ENCODE measurements at regions of chr3 and their contacts with region 1.

Region 1: DNA sequence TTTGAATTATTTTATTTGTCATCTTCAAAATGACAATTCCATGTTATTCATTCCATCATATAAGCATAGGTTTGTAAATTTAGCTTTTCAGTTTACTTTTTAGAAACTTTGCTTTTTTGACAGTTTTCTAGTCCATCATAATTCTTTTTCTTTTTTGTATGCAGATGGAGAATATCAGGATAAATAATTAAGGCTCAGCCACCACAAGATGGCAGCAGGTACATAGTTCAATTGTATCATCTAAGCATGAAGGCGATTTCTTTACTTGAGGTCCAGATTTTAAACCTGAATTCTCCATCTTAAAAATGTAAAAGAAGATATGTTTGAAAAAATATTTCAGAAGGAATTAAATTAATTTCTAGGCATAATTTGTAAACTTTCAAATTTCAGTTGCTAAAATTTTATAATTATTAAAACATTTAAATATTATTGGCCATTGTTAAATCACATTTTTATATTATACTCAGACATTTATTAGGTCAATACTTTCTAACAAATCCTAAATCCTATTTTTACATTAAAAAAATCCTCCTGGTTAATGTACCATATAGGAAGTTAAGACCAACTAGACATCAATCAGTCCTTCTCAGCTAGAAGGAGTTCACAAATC is 15.1 kb downstream of the PLSCR5 start:
- DNase-seq: peak; percentile 39
- ATAC-seq: no peak
- H3K4me3 Mint-ChIP-seq: no peak overlapping the region
- H3K27ac Mint-ChIP-seq: no peak overlapping the region
- H3K4me1 Mint-ChIP-seq: no peaks in the 10 kb centered on the region
- H3K27me3 Mint-ChIP-seq: peaks cover 27% of the 10 kb centered on the region

Region 2: DNA sequence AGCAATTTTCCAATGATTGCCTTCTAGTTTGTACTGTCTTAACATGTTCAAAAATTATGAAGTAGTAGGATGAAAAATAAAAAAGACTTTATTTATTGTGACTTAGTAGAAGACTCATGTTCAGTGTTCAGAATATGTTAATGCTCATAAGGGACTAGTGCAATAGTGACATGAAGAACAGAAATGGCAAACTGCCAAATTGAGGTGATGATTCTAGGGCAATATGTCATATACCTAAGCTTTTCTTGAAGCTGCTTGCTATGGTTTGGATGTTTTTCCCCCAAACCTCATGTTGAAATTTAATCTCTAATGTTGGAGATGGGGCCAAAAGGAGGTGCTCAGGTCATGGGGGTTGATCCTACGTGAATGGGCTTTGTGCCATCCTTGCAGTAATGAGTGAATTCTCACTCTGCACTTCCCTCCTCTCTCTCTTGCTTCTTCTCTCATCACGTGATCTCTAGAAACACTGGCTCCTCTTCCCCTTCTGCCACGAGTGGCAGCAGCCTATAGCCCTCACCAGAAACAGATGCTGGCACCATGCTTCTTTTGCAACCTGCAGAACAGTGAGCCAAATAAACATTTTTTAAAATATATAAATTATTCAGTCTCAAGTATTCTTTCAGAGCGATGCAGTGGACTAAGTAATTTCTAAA is 32.4 kb before region 1 on chr3:
- CTCF ChIA-PET with region 1: no interaction called
- POLR2A ChIA-PET with region 1: no interaction called
- DNase-seq: no peak
- ATAC-seq: no peak
- H3K4me3 Mint-ChIP-seq: no peak overlapping the region
- H3K27ac Mint-ChIP-seq: no peak overlapping the region
- H3K4me1 Mint-ChIP-seq: peaks cover 20% of the 10 kb centered on the region
- H3K27me3 Mint-ChIP-seq: peaks cover 5% of the 10 kb centered on the region

Region 3: DNA sequence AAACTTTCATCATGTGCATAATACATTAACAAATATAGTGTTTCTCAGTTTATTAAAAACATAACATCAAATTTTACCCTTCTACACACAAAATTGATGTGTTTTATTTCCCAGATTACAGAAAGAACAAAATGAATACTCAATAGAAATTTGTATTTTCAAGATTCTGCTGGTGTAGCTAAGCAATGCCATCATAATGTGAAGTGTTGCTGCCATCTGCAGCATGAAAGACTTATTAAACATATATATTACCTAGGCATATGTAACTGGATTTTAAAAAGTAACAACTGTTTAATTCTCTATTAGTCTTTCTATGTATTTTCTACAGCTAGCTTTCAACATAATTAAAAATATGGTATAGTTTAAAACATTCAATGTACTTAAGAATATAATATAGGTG is 12.3 kb before region 1 on chr3:
- CTCF ChIA-PET with region 1: interaction called, 11 read pairs
- POLR2A ChIA-PET with region 1: no interaction called
- DNase-seq: peak; percentile 53
- ATAC-seq: peak; percentile 67
- H3K4me3 Mint-ChIP-seq: no peak overlapping the region
- H3K27ac Mint-ChIP-seq: no peak overlapping the region
- H3K4me1 Mint-ChIP-seq: no peaks in the 10 kb centered on the region
- H3K27me3 Mint-ChIP-seq: peaks cover 11% of the 10 kb centered on the region

Region 4: GRCh38 chr3:146611096-146611495 is 21.1 kb after region 1 on chr3:
- CTCF ChIA-PET with region 1: no interaction called
- POLR2A ChIA-PET with region 1: no interaction called
- DNase-seq: no peak
- ATAC-seq: no peak
- H3K4me3 Mint-ChIP-seq: no peak overlapping the region
- H3K27ac Mint-ChIP-seq: no peak overlapping the region
- H3K4me1 Mint-ChIP-seq: no peaks in the 10 kb centered on the region
- H3K27me3 Mint-ChIP-seq: peaks cover 12% of the 10 kb centered on the region

Measured in activated CD8-positive, alpha-beta T cell treated with anti-CD3 and anti-CD28 coated beads, Interleukin-2, amount 10 ng/mL, durations not matched to agents 7 days and 5 days (primary cell).